Heart left ventricle (tissue), 16 donors: ENCODE measurements at regions of chr9 and their contacts with region 1.

Region 1: GRCh38 chr9:71162126-71162525 is 40.7 kb upstream of the TRPM3 start:
- DNase-seq: no peak
- ATAC-seq: no peak
- H3K4me3 ChIP-seq: no peak overlapping the region
- H3K27ac ChIP-seq: no peak overlapping the region
- H3K4me1 ChIP-seq: no peaks in the 10 kb centered on the region
- H3K27me3 ChIP-seq: no peaks in the 10 kb centered on the region
- CTCF ChIP-seq: no peak
- POLR2A ChIP-seq: no peak

Region 2: DNA sequence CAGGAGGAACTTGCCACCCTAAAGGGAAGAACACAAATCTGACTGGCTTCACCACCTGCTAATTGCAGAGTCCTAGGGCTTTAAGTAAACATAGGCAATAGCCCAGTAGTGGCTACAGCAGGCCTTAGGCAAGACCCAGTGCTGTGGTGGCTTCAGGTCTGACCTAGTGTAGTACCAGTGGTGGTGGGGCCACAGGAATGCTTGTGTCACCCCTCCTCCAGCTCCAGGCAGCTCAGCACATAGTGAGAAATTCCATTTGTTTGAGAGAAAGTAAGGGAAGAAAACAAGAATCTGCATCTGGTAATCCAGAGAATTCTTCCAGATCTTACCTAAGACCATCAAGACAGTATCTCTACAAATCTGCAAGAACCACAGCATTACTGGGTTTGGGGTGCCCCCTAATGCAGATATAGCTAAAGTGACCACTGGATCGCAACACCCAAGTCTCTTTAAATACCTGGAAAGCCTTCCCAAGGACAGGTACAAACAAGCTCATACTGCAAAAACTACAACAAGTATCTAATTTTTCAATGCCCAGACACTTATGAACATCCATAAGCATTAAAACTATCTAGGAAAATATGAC is 61.9 kb after region 1 on chr9:
- intact Hi-C with region 1: loop called in 1 of 10 experiments (anchors 10 kb)
- DNase-seq: no peak
- ATAC-seq: no peak
- H3K4me3 ChIP-seq: no peak overlapping the region
- H3K27ac ChIP-seq: no peak overlapping the region
- H3K4me1 ChIP-seq: no peaks in the 10 kb centered on the region
- H3K27me3 ChIP-seq: no peaks in the 10 kb centered on the region
- CTCF ChIP-seq: no peak
- POLR2A ChIP-seq: no peak